IMR-90 (cell line): ENCODE measurements at regions of chr5 and their contacts with region 1.

Region 1: DNA sequence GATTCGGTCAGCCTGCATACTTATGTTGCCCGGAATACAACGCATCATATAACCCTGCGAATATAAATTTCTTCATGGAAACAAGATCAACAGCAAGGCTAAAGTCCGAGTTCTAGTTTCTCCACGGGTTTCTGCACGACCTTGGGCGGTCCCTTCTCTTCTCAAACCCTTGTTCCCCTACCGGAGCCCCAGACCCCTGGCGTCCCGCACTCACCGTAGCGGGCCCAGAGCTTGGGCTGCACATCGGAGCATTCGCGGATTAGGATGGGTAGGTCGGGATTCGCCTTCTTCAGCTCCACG is 438 bp downstream of the NDUFA2 start:
- DNase-seq: no peak
- ATAC-seq: peak; percentile 25
- H3K4me3 ChIP-seq: peak overlapping the region; percentile 82
- H3K27ac ChIP-seq: peak overlapping the region; percentile 25
- H3K4me1 ChIP-seq: peaks cover 5% of the 10 kb centered on the region; the same call in 1 of the 2 replicates
- H3K27me3 ChIP-seq: no peaks in the 10 kb centered on the region
- CTCF ChIP-seq: no peak
- POLR2A ChIP-seq: no peak
- RAD21 ChIP-seq: no peak

Region 2: GRCh38 chr5:140401362-140402257 is 245.4 kb before region 1 on chr5 and contains the start of gene ANKHD1:
- CTCF ChIA-PET with region 1: interaction called, 4 read pairs
- POLR2A ChIA-PET with region 1: no interaction called
- dilution Hi-C with region 1: no loop called
- in situ Hi-C with region 1: no loop called
- intact Hi-C with region 1: loop called (anchors 5 kb)
- DNase-seq: peak; percentile 100
- ATAC-seq: peak; percentile 85
- H3K4me3 ChIP-seq: peak within 1 kb of the TSS; percentile 72
- H3K27ac ChIP-seq: peak within 1 kb of the TSS; percentile 79
- H3K4me1 ChIP-seq: no peaks in the 10 kb centered on the region
- H3K27me3 ChIP-seq: no peaks in the 10 kb centered on the region
- CTCF ChIP-seq: no peak; the same call in 1 of the 2 replicates
- POLR2A ChIP-seq: peak; percentile 76
- RAD21 ChIP-seq: no peak
- total RNA-seq, gene ANKHD1: 36.7 and 46.4 TPM in 2 replicates

Region 3: DNA sequence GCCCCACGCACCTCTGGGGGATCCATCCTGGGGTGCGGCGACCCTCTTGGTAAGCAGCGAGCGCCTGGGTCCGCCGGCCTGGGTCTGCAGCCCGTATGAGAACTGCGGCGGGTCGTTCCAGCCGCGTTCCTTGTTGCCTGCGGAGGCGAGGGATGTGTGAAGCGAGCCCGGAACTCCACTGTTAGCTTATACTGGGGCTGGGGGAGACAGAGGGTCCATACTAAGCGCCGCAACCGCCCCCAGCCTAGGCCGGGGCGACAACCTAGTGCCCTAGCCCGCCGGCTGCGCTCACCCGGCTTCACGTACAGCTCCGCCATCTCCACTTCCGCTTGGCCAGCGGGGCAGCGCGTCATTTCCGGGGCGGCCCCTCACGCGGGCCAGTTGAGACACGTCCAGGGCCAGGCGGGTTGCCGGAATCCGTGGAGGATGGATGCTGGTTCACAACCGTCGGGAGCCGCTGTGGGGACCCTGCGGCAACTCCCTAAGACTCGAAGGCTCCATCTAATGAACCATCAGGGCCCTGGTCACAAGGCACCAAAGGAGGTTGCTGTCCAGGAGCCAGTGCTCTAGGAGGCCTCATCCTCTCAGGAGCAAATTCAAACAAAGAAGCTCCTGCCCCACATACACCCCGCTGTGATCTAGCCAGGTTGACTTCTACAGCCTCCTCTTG is 89.7 kb before region 1 on chr5 and contains the start of gene SRA1:
- CTCF ChIA-PET with region 1: no interaction called
- POLR2A ChIA-PET with region 1: interaction called, 11 read pairs
- dilution Hi-C with region 1: no loop called
- in situ Hi-C with region 1: loop called (anchors 5 kb)
- intact Hi-C with region 1: no loop called
- DNase-seq: peak; percentile 87
- ATAC-seq: peak; percentile 88
- H3K4me3 ChIP-seq: peak within 1 kb of the TSS; percentile 92
- H3K27ac ChIP-seq: peak within 1 kb of the TSS; percentile 96
- H3K4me1 ChIP-seq: peaks cover 16% of the 10 kb centered on the region
- H3K27me3 ChIP-seq: no peaks in the 10 kb centered on the region
- CTCF ChIP-seq: 0 out of 2 replicates have a peak, but pooled peaks have one; percentile 13
- POLR2A ChIP-seq: peak; percentile 99
- RAD21 ChIP-seq: no peak
- total RNA-seq, gene SRA1: 52.9 and 53.9 TPM in 2 replicates

Region 4: GRCh38 chr5:140564196-140565023 is 82.6 kb before region 1 on chr5 and contains the starts of genes APBB3 and SLC35A4:
- CTCF ChIA-PET with region 1: no interaction called
- POLR2A ChIA-PET with region 1: no interaction called
- dilution Hi-C with region 1: no loop called
- in situ Hi-C with region 1: loop called (anchors 5 kb)
- intact Hi-C with region 1: no loop called
- DNase-seq: peak; percentile 99
- ATAC-seq: peak; percentile 92
- H3K4me3 ChIP-seq: peak within 1 kb of the TSS; percentile 82
- H3K27ac ChIP-seq: peak within 1 kb of the TSS; percentile 83
- H3K4me1 ChIP-seq: peaks cover 8% of the 10 kb centered on the region
- H3K27me3 ChIP-seq: no peaks in the 10 kb centered on the region
- CTCF ChIP-seq: no peak
- POLR2A ChIP-seq: peak; percentile 88
- RAD21 ChIP-seq: peak; percentile 16; the same call in 1 of the 2 replicates
- total RNA-seq, gene APBB3: 6.6 and 8.1 TPM in 2 replicates
- total RNA-seq, gene SLC35A4: 17.2 and 19.2 TPM in 2 replicates

Region 5: DNA sequence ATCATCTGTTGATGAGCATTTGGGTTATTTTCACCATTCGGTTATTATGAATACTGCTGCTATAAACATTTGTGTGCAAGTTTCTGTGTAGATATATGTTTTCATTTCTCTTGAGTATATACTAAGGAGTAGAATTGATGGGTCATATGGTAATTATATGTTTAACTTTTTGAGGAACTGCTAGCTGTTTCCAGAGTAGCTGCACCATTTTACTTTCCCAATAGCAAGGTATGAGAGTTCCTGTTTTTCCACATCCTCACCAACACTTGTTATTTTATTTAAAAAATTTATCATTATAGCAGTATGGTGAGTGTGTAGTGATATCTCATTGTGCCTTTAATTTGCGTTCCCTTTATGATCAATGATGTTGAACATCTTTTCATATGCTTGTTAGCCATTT is 43.3 kb before region 1 on chr5:
- CTCF ChIA-PET with region 1: no interaction called
- POLR2A ChIA-PET with region 1: interaction called, 10 read pairs
- dilution Hi-C with region 1: no loop called
- in situ Hi-C with region 1: no loop called
- intact Hi-C with region 1: no loop called
- DNase-seq: no peak
- ATAC-seq: no peak
- H3K4me3 ChIP-seq: no peak overlapping the region
- H3K27ac ChIP-seq: no peak overlapping the region
- H3K4me1 ChIP-seq: peaks cover 2% of the 10 kb centered on the region
- H3K27me3 ChIP-seq: peaks cover 2% of the 10 kb centered on the region; the same call in 1 of the 2 replicates
- CTCF ChIP-seq: no peak
- POLR2A ChIP-seq: no peak
- RAD21 ChIP-seq: no peak

Region 6: GRCh38 chr5:140664359-140665119 is 17.5 kb after region 1 on chr5 and contains the start of gene WDR55:
- CTCF ChIA-PET with region 1: no interaction called
- POLR2A ChIA-PET with region 1: no interaction called
- dilution Hi-C with region 1: no loop called
- in situ Hi-C with region 1: no loop called
- intact Hi-C with region 1: loop called (anchors 2 kb)
- DNase-seq: peak; percentile 88
- ATAC-seq: peak; percentile 97
- H3K4me3 ChIP-seq: peak within 1 kb of the TSS; percentile 86
- H3K27ac ChIP-seq: peak within 1 kb of the TSS; percentile 92
- H3K4me1 ChIP-seq: peaks cover 3% of the 10 kb centered on the region; the same call in 1 of the 2 replicates
- H3K27me3 ChIP-seq: no peaks in the 10 kb centered on the region
- CTCF ChIP-seq: no peak; the same call in 1 of the 2 replicates
- POLR2A ChIP-seq: peak; percentile 91
- RAD21 ChIP-seq: 0 out of 2 replicates have a peak, but pooled peaks have one; percentile 5
- total RNA-seq, gene WDR55: 19.2 and 20.4 TPM in 2 replicates